Astrocyte of the cerebellum (primary cell): ENCODE measurements at regions of chr15 and their contacts with region 1.

Region 1: DNA sequence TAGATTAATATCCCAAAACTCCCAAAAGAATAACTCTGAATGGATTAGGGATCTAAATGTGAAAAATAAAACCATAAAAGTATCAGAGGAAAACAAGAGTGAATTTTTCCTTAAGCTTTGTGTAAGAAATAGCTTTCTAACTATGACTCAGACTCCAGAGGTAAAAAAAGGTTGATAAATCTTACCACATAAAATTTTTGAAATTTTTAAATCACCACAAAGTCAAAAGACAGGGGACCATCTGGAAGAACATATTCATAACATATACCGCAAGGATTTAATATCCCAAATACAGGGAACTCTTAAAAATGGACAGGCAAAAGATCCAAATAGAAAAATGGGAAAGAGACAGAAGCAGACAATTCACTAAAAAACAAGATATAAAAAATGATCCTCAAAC is 145.0 kb downstream of the ARNT2 start:
- DNase-seq: peak; percentile 79
- H3K4me3 ChIP-seq: peak overlapping the region; percentile 13
- CTCF ChIP-seq: no peak

Region 2: DNA sequence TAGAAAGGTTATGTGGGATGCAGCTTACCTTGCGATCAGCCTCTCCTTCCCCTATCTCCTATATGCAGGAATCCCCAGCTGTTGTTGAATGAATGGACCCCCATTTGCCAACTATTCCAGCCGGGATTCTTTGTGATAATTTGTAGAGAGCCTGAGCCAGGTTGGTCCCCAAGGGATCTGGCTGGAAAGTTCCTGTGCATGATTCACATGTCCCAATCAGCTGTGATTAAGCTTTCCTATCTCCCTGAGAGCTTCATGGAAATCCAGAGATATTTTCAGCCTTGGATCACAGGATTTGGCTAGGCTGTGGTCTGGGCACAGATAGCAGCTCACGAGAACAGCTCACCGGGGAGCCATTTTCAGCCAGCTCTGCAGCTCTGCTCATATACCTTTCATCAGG is 68.3 kb before region 1 on chr15:
- in situ Hi-C with region 1: loop called (anchors 5 kb)
- DNase-seq: peak; percentile 94
- H3K4me3 ChIP-seq: no peak overlapping the region
- CTCF ChIP-seq: no peak